HepG2 (cell line): ENCODE measurements at regions of chr9 and their contacts with region 1.

Region 1: DNA sequence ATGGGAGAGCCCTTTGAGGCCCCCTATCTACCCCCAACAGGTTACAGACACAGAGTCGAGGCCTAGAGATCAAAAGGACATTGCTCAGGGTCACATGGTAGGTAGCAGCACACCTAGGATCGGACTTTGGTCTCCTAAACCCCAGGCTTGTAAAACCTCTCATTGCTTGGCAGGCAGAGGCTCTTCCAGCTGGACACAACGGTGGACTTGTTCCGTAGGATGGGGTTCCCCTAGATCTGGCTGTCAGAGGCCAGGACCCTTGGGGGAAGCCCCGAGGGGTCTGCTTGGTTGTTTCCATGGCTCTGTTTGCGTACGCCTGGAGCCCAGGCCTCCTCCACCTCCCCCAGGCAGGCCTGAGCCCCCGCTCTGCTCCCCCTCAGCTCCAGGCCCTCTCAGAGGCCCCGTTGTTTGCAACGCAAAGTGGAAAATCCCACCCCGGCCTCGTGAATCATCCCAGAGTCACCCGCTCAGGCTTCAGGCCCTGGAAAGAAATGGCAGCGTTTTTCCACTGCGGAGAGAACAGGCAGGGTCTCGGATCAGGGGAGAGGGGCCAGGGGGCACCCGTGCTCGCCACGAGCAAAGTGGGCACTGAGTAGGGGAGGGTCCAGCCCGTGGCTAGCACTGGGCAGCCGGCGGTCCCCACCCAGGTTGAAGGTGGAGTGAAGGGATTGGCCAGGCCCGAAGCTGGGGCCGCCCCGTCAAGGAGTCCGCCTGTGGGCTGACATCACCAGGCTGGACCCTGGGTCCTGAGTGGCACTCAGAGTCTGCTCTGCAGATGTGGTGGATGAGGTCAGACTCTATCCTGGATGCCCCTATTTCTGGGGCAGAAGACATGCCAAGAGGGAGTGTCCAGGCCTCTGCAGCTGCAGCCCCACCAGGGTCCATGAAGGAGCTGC is 19.8 kb downstream of the COL27A1 start:
- DNase-seq: peak; percentile 99
- ATAC-seq: peak; percentile 82
- H3K4me3 ChIP-seq: peak overlapping the region in 2 of 3 experiments; percentile 21 to 53; a peak in 3 of 6 replicates
- H3K27ac ChIP-seq: peak overlapping the region; percentile 98
- H3K4me1 ChIP-seq: peaks cover 70% of the 10 kb centered on the region
- H3K27me3 ChIP-seq: no peaks in the 10 kb centered on the region
- CTCF ChIP-seq: peak; percentile 44
- EP300 ChIP-seq: peak; percentile 66 to 77; a peak in 3 of 4 replicates
- POLR2A ChIP-seq: peak; percentile 78 to 80
- RAD21 ChIP-seq: peak; percentile 5; the same call in 1 of the 2 replicates

Region 2: DNA sequence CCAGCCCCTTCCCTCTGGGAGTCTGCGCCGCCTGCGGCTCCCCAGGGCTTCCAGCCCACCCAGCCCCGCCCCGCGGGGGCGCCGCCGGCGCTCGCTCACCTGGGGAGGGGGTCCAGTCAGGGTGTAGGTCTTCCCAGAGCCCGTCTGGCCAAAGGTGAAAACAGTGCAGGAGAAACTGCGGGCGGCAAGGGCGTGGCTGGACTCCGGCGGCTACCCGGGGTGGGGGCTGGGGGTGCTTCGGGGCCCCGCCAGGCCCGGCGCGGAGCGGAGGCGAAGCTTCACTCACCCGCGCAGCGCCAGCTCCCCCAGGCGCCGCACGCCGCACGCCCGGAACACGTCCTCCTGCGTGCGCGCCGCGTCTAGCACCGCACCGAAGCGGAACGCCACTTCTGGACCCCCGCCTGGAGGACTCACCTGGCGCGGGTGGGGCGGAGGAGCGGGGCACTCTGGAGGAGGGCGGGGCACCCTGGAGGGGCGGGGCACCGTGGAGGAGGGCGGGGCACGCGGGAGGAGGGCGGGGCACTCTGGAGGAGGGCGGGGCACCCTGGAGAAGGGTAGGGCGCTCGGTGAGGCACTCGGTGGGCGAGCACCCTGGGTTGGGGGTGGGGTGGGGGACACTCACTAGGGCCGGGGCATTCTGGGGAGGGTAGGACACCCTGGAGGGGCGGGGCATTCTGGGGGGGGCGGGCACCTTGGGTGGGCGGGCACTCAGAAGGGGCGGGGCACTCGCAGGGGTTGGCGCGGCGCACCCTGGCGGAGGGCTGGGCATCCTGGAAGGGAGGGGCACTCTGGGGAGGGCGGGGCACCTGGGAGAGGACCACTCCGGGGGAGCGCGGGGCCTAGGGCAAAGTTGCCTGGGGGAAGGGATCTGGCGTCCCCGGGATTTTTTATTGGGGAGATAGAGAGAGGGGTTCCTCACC is 76.8 kb before region 1 on chr9:
- CTCF ChIA-PET with region 1: no interaction called
- POLR2A ChIA-PET with region 1: interaction called, 25 read pairs
- in situ Hi-C with region 1: no loop called
- intact Hi-C with region 1: no loop called
- DNase-seq: no peak
- ATAC-seq: peak; percentile 43
- H3K4me3 ChIP-seq: peak overlapping the region; percentile 45 to 67 (median 49); a peak in 5 of 6 replicates
- H3K27ac ChIP-seq: peak overlapping the region; percentile 55
- H3K4me1 ChIP-seq: peaks cover 53% of the 10 kb centered on the region
- H3K27me3 ChIP-seq: no peaks in the 10 kb centered on the region
- CTCF ChIP-seq: no peak
- EP300 ChIP-seq: no peak
- POLR2A ChIP-seq: no peak
- RAD21 ChIP-seq: no peak

Region 3: DNA sequence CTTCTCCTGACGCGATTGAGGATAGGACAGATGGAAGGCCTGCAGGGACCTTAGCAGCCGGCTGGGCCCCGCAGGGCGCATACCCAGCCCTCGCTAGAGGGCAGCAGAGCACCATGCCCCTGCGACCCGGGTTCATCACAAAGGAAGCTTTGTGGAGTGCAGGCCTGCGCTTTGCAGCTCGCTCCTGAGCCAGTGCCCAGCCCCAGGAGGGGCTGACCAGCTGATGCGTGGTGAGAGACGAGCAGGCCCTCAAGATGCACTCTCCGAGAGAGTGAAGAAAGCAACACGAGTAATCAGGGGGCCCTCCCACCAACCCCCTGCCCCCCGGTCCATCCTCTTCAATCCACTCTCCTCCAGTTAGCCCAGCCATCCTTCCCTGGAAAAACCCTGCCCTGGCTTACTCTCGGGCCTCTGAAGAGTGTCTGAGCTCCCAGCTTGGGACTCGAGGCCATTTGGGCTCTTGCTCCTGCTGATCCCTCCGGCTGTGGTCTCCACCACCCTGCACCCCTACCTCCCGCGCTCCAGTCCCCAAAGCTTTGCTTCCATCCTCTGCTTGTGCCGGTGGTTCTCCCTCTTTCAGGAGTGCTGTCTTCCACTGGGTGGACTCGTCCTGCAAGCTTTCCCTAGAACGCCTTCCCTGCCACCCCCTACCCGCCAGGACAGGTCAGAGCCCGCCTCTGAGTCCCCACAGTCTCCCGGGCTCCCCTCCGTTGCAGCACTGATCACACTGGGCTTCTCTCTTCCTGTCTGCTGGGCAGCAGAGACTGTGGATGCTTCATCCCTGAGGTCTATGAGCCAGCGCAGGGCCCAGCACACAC is 66.9 kb before region 1 on chr9:
- CTCF ChIA-PET with region 1: interaction called, 4 read pairs
- POLR2A ChIA-PET with region 1: interaction called, 50 read pairs
- in situ Hi-C with region 1: no loop called
- intact Hi-C with region 1: loop called (anchors 5 kb)
- DNase-seq: peak; percentile 80
- ATAC-seq: peak; percentile 98
- H3K4me3 ChIP-seq: peak overlapping the region; percentile 40 to 65 (median 40)
- H3K27ac ChIP-seq: no peak overlapping the region
- H3K4me1 ChIP-seq: peaks cover 51% of the 10 kb centered on the region
- H3K27me3 ChIP-seq: no peaks in the 10 kb centered on the region
- CTCF ChIP-seq: peak; percentile 99
- EP300 ChIP-seq: no peak
- POLR2A ChIP-seq: no peak
- RAD21 ChIP-seq: peak; percentile 100

Region 4: DNA sequence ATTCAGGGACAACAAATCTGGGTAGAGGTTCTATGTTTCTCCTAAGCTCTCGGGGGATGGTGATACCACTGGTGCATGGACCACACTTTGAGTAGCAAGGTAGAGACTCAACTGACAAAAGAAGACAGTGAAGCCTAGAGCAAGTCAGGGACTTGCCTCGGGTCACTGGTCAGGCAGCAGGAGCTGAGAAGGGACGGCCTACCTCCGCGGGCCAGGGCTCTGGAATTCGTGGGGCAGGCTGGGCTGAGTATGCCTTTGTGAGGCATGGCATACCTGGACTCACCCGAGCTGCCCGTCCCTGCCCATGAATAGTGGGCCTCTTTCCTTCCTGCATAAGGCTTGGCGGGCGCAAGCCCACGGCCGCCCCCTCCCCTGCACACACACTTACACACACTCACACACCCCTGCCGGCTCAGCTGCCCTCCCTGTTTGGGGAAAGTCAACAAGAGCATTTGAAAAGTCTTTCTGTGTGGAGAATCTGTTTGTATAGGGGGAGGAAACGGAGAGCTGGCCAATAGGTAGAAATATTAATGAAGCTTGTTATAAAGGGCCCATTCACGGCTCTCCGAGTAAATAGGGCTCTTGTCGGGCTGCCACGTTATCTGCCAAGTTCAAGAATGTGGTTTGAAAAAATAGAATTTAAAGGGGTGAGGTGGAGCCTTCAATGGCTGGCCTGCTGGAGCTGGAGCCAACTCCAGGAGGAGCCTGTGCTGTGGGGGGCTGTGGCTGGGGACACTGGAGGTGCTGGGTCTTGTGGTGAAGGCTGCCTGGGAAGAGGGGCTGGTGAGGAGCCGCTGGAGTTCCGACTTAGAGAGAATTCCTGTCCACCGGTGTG is 56.9 kb before region 1 on chr9:
- CTCF ChIA-PET with region 1: no interaction called
- POLR2A ChIA-PET with region 1: interaction called, 77 read pairs
- in situ Hi-C with region 1: no loop called
- intact Hi-C with region 1: loop called (anchors 1 kb)
- DNase-seq: peak; percentile 99
- ATAC-seq: peak; percentile 81
- H3K4me3 ChIP-seq: peak overlapping the region; percentile 27 to 64 (median 48); a peak in 5 of 6 replicates
- H3K27ac ChIP-seq: peak overlapping the region; percentile 87
- H3K4me1 ChIP-seq: peaks cover 93% of the 10 kb centered on the region
- H3K27me3 ChIP-seq: no peaks in the 10 kb centered on the region
- CTCF ChIP-seq: no peak; the same call in 1 of the 2 replicates
- EP300 ChIP-seq: peak in 1 of 2 experiments; percentile 93; a peak in 2 of 4 replicates
- POLR2A ChIP-seq: peak in 1 of 2 experiments; percentile 59; a peak in 2 of 4 replicates
- RAD21 ChIP-seq: 0 out of 2 replicates have a peak, but pooled peaks have one; percentile 18

Region 5: GRCh38 chr9:114141553-114142402 is 33.3 kb before region 1 on chr9:
- CTCF ChIA-PET with region 1: no interaction called
- POLR2A ChIA-PET with region 1: interaction called, 15 read pairs
- in situ Hi-C with region 1: no loop called
- intact Hi-C with region 1: no loop called
- DNase-seq: peak; percentile 82
- ATAC-seq: peak; percentile 64
- H3K4me3 ChIP-seq: peak overlapping the region in 1 of 3 experiments; percentile 39; a peak in 2 of 6 replicates
- H3K27ac ChIP-seq: peak overlapping the region; percentile 6
- H3K4me1 ChIP-seq: peaks cover 78% of the 10 kb centered on the region
- H3K27me3 ChIP-seq: no peaks in the 10 kb centered on the region; a peak in 1 of 5 replicates
- CTCF ChIP-seq: no peak
- EP300 ChIP-seq: peak in 1 of 2 experiments; percentile 74; a peak in 2 of 4 replicates
- POLR2A ChIP-seq: no peak
- RAD21 ChIP-seq: no peak

Region 6: DNA sequence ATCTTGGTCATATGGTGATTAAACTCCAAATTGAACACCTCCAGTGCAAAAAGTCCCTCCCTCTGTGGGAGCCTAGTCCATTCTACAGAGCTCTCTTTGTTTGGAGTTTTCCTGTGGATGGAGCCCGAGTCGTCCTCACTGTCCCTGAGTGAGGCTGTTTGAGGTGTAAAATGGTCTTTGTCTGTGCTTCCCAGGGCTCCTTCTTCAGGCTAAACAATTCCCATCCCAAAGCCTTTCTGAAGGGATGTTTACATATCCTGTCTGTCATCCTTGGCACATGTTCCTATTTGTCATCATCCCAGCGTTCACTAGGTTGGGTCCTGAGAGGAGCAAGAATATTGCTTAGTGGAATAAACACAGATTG is 49.1 kb after region 1 on chr9:
- CTCF ChIA-PET with region 1: no interaction called
- POLR2A ChIA-PET with region 1: interaction called, 17 read pairs
- in situ Hi-C with region 1: no loop called
- intact Hi-C with region 1: loop called (anchors 2 kb)
- DNase-seq: peak; percentile 53
- ATAC-seq: peak; percentile 19; the same call in 2 of the 3 replicates
- H3K4me3 ChIP-seq: no peak overlapping the region
- H3K27ac ChIP-seq: peak overlapping the region; percentile 36
- H3K4me1 ChIP-seq: peaks cover 19% of the 10 kb centered on the region
- H3K27me3 ChIP-seq: no peaks in the 10 kb centered on the region
- CTCF ChIP-seq: no peak
- EP300 ChIP-seq: no peak
- POLR2A ChIP-seq: no peak
- RAD21 ChIP-seq: no peak